ENCODE measurements at regions of chr7 and their contacts with region 1.

Region 1: GRCh38 chr7:12067141-12067831 is 143.8 kb upstream of the TMEM106B start:
- DNase-seq: peak in 2 of 3 donors; percentile 47 to 55
- ATAC-seq: peak; percentile 86 to 92 (median 91)
- H3K4me3 ChIP-seq: no peak overlapping the region
- H3K27ac ChIP-seq: no peak overlapping the region
- H3K4me1 ChIP-seq: no peaks in the 10 kb centered on the region
- H3K27me3 ChIP-seq: no peaks in the 10 kb centered on the region
- CTCF ChIP-seq: peak; percentile 60 to 77 (median 75)
- POLR2A ChIP-seq: no peak

Region 2: GRCh38 chr7:11881680-11882079 is 185.6 kb before region 1 on chr7:
- intact Hi-C with region 1: no loop called
- DNase-seq: no peak
- ATAC-seq: no peak
- H3K4me3 ChIP-seq: no peak overlapping the region
- H3K27ac ChIP-seq: no peak overlapping the region
- H3K4me1 ChIP-seq: no peaks in the 10 kb centered on the region
- H3K27me3 ChIP-seq: no peaks in the 10 kb centered on the region
- CTCF ChIP-seq: no peak
- POLR2A ChIP-seq: no peak

Region 3: GRCh38 chr7:12291870-12292269 is 224.6 kb after region 1 on chr7:
- intact Hi-C with region 1: no loop called
- DNase-seq: no peak
- ATAC-seq: peak in 1 of 4 donors; percentile 24
- H3K4me3 ChIP-seq: no peak overlapping the region
- H3K27ac ChIP-seq: no peak overlapping the region
- H3K4me1 ChIP-seq: no peaks in the 10 kb centered on the region
- H3K27me3 ChIP-seq: no peaks in the 10 kb centered on the region
- CTCF ChIP-seq: peak in 3 of 4 donors; percentile 19 to 32 (median 27)
- POLR2A ChIP-seq: no peak

Region 4: DNA sequence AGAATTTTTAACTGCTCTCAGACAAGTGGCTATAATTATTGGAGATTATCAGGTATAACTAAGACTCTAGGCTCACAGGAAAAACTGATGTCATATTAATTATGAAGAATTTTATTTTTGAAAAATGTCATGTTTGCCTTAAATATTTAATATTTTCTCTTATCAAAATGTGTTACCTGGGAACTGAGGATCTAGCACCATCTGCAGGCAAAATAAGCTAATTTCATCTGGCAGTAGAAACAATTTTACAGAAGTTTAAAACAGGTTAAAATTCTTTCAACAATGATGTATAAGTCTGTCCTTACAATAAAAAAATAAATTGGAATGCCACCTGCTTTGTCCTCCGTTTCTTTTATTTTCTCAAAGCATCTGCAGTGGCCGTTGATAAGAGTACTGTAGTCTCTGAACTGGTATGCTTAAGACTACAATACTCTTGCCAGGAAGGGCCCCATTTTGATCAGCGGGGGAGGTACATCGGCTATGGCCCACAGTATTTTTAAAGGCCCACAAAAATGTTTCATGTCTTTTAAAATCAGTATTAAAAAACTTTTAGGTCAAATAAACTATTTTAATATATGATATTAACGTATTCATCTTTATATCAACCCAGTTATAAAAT is 255.1 kb after region 1 on chr7:
- intact Hi-C with region 1: loop called (anchors 5 kb)
- DNase-seq: no peak
- ATAC-seq: peak in 3 of 4 donors; percentile 34 to 46 (median 41)
- H3K4me3 ChIP-seq: no peak overlapping the region
- H3K27ac ChIP-seq: no peak overlapping the region
- H3K4me1 ChIP-seq: no peaks in the 10 kb centered on the region
- H3K27me3 ChIP-seq: no peaks in the 10 kb centered on the region
- CTCF ChIP-seq: peak; percentile 70 to 78 (median 74)
- POLR2A ChIP-seq: no peak

Region 5: GRCh38 chr7:12328888-12329770 is 261.8 kb after region 1 on chr7:
- intact Hi-C with region 1: loop called (anchors 5 kb)
- DNase-seq: no peak
- ATAC-seq: no peak
- H3K4me3 ChIP-seq: no peak overlapping the region
- H3K27ac ChIP-seq: no peak overlapping the region
- H3K4me1 ChIP-seq: no peaks in the 10 kb centered on the region
- H3K27me3 ChIP-seq: no peaks in the 10 kb centered on the region
- CTCF ChIP-seq: no peak
- POLR2A ChIP-seq: no peak

Region 6: GRCh38 chr7:12389089-12389700 is 321.9 kb after region 1 on chr7:
- intact Hi-C with region 1: no loop called
- DNase-seq: no peak
- ATAC-seq: peak; percentile 79 to 91 (median 86)
- H3K4me3 ChIP-seq: no peak overlapping the region
- H3K27ac ChIP-seq: no peak overlapping the region
- H3K4me1 ChIP-seq: no peaks in the 10 kb centered on the region
- H3K27me3 ChIP-seq: no peaks in the 10 kb centered on the region
- CTCF ChIP-seq: peak; percentile 57 to 80 (median 75)
- POLR2A ChIP-seq: no peak

Measured in right lobe of liver (tissue), 6 donors.